Pancreas (tissue), 10 donors: ENCODE measurements at regions of chr1 and their contacts with region 1.

Region 1: DNA sequence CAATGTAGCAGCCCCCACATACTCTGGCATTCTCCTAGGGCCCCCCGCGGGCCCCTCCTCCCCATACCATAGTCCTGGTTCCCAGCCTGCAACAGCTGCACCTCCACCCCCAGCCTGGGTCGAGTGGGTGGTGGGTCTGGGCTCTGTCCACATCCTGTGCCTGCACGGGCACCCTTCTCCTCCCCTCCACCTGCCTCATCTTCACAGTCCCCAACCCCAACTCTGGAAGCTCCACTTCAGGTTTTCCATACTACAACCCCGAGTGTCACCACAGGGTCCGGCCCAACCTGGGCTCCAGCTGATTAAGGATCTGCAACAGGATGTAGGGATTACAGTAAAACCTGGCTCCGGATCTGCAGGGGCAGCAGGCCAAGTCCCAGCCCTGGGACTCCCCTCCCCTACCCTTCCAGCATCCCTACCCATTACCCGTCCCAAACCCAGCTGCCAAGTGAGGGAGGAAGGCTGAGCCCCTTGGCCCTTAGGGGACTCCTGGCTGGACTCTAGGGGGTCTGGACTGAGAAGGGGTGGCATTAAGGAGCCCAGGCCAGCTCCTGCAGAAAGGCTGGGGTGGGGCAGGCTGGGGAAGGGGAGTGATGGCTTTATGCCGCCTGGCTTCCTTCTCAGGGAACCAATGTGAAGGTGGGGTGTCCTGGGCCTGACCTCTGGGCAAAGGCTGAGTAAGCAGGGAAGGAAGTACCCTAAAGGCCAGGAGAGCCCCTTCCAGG is 116.8 kb downstream of the CASZ1 start:
- DNase-seq: peak in 2 of 6 donors; percentile 60 to 66
- ATAC-seq: peak in 3 of 4 donors; percentile 18 to 62 (median 50)
- H3K4me3 ChIP-seq: no peak overlapping the region
- H3K27ac ChIP-seq: no peak overlapping the region
- H3K4me1 ChIP-seq: peaks cover 4 to 30% (median 22%) of the 10 kb centered on the region in 3 donors
- H3K27me3 ChIP-seq: no peaks in the 10 kb centered on the region
- CTCF ChIP-seq: no peak

Region 2: DNA sequence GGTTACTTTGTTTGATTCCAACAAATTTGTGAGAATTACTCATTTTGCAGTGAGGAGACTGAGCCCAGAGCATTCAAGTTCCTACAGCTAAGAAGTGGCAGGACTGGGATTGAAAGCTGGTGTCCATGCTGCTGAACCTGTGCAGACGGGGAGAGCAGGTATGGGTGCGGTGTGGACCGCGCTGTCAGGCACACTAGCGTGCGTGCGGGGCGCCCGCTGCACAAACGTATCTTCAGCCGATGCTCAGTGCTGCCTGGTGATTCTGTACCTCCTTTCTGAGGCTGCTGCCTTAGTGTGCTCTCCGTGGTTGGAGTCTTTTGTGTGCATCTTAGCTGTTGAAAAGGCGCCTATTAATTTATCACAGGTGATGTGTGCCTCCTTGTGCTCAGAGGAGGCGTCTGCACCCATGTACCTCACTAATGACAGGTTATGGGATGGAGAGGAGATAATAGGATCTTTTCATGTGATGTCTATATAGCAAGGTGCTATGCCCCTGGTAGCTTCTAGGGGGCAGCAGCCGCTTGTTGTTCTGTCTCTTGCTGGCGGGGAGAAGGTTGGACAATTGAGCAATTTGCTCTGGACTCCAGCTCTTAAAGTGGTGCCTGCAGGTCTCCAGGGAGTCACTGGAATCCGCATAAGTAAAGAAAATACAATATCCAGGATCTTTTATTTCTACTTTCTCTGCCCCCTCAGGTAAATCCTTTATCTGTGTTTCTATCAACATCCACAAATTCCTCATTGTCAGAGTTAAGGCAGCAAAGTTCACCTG is 172.4 kb before region 1 on chr1:
- intact Hi-C with region 1: loop called in 1 of 3 experiments (anchors 10 kb)
- DNase-seq: peak; percentile 47 to 67 (median 54)
- ATAC-seq: peak; percentile 89 to 93 (median 92)
- H3K4me3 ChIP-seq: no peak overlapping the region
- H3K27ac ChIP-seq: no peak overlapping the region
- H3K4me1 ChIP-seq: peaks cover 9 to 20% (median 10%) of the 10 kb centered on the region in 3 donors
- H3K27me3 ChIP-seq: no peaks in the 10 kb centered on the region
- CTCF ChIP-seq: peak; percentile 14 to 78 (median 60)

Region 3: GRCh38 chr1:10788592-10789006 is 108.9 kb after region 1 on chr1:
- intact Hi-C with region 1: loop called in 1 of 3 experiments (anchors 10 kb)
- DNase-seq: peak; percentile 41 to 85 (median 61)
- ATAC-seq: peak; percentile 55 to 82 (median 80)
- H3K4me3 ChIP-seq: no peak overlapping the region
- H3K27ac ChIP-seq: peak overlapping the region in 1 of 4 donors; percentile 10
- H3K4me1 ChIP-seq: peaks cover 6 to 13% (median 7%) of the 10 kb centered on the region in 3 donors
- H3K27me3 ChIP-seq: no peaks in the 10 kb centered on the region
- CTCF ChIP-seq: peak in 2 of 4 donors; percentile 11 to 18